HCT116 (cell line): ENCODE measurements at regions of chr1 and their contacts with region 1.

Region 1: GRCh38 chr1:11907275-11908094 is 18.7 kb downstream of the KIAA2013 start:
- DNase-seq: peak; percentile 92
- ATAC-seq: peak; percentile 63
- H3K4me3 ChIP-seq: no peak overlapping the region
- H3K27ac ChIP-seq: peak overlapping the region; percentile 62
- H3K4me1 ChIP-seq: peaks cover 5 to 32% of the 10 kb centered on the region in 2 experiments; a peak in 3 of 4 replicates
- H3K27me3 ChIP-seq: no peaks in the 10 kb centered on the region
- CTCF ChIP-seq: peak in 2 of 3 experiments; percentile 73 to 78; a peak in 4 of 6 replicates
- POLR2A ChIP-seq: no peak
- RAD21 ChIP-seq: no peak

Region 2: GRCh38 chr1:11838349-11839272 is 68.9 kb before region 1 on chr1:
- CTCF ChIA-PET with region 1: interaction called, 12 read pairs
- POLR2A ChIA-PET with region 1: interaction called, 9 read pairs
- RAD21 ChIA-PET with region 1: no interaction called
- intact Hi-C with region 1: loop called (anchors 1 kb)
- DNase-seq: no peak
- ATAC-seq: peak; percentile 98
- H3K4me3 ChIP-seq: no peak overlapping the region
- H3K27ac ChIP-seq: no peak overlapping the region
- H3K4me1 ChIP-seq: no peaks in the 10 kb centered on the region
- H3K27me3 ChIP-seq: no peaks in the 10 kb centered on the region
- CTCF ChIP-seq: peak; percentile 95 to 99 (median 97)
- POLR2A ChIP-seq: no peak
- RAD21 ChIP-seq: peak; percentile 99

Region 3: GRCh38 chr1:11918779-11919519 is 11.5 kb after region 1 on chr1:
- CTCF ChIA-PET with region 1: no interaction called
- POLR2A ChIA-PET with region 1: interaction called, 22 read pairs
- RAD21 ChIA-PET with region 1: no interaction called
- intact Hi-C with region 1: no loop called
- DNase-seq: no peak
- ATAC-seq: no peak
- H3K4me3 ChIP-seq: no peak overlapping the region
- H3K27ac ChIP-seq: no peak overlapping the region
- H3K4me1 ChIP-seq: peaks cover 0 to 8% of the 10 kb centered on the region in 2 experiments; a peak in 2 of 4 replicates
- H3K27me3 ChIP-seq: no peaks in the 10 kb centered on the region
- CTCF ChIP-seq: no peak
- POLR2A ChIP-seq: no peak
- RAD21 ChIP-seq: no peak

Region 4: GRCh38 chr1:11940260-11940921 is 32.9 kb after region 1 on chr1:
- CTCF ChIA-PET with region 1: no interaction called
- POLR2A ChIA-PET with region 1: interaction called, 47 read pairs
- RAD21 ChIA-PET with region 1: no interaction called
- intact Hi-C with region 1: no loop called
- DNase-seq: no peak
- ATAC-seq: no peak
- H3K4me3 ChIP-seq: no peak overlapping the region
- H3K27ac ChIP-seq: peak overlapping the region; percentile 12; the same call in 1 of the 2 replicates
- H3K4me1 ChIP-seq: peaks cover 53 to 66% of the 10 kb centered on the region in 2 experiments
- H3K27me3 ChIP-seq: no peaks in the 10 kb centered on the region
- CTCF ChIP-seq: no peak
- POLR2A ChIP-seq: no peak
- RAD21 ChIP-seq: no peak

Region 5: GRCh38 chr1:11979851-11980675 is 72.6 kb after region 1 on chr1 and contains the start of gene MFN2:
- CTCF ChIA-PET with region 1: interaction called, 5 read pairs
- POLR2A ChIA-PET with region 1: interaction called, 115 read pairs
- RAD21 ChIA-PET with region 1: interaction called, 3 to 10 read pairs
- intact Hi-C with region 1: loop called (anchors 1 kb)
- DNase-seq: peak; percentile 94
- ATAC-seq: peak; percentile 94
- H3K4me3 ChIP-seq: peak within 1 kb of the TSS; percentile 73 to 83
- H3K27ac ChIP-seq: peak within 1 kb of the TSS; percentile 89
- H3K4me1 ChIP-seq: peaks cover 21 to 24% of the 10 kb centered on the region in 2 experiments
- H3K27me3 ChIP-seq: no peaks in the 10 kb centered on the region
- CTCF ChIP-seq: no peak
- POLR2A ChIP-seq: peak; percentile 83
- RAD21 ChIP-seq: no peak
- total RNA-seq, gene MFN2: 83.0 TPM

Region 6: GRCh38 chr1:12078938-12079861 is 171.7 kb after region 1 on chr1:
- CTCF ChIA-PET with region 1: no interaction called
- POLR2A ChIA-PET with region 1: interaction called, 15 read pairs
- RAD21 ChIA-PET with region 1: no interaction called
- intact Hi-C with region 1: no loop called
- DNase-seq: peak; percentile 27
- ATAC-seq: peak; percentile 71
- H3K4me3 ChIP-seq: no peak overlapping the region
- H3K27ac ChIP-seq: no peak overlapping the region
- H3K4me1 ChIP-seq: peaks cover 0 to 16% of the 10 kb centered on the region in 2 experiments; a peak in 1 of 4 replicates
- H3K27me3 ChIP-seq: no peaks in the 10 kb centered on the region
- CTCF ChIP-seq: peak; percentile 55 to 70 (median 62)
- POLR2A ChIP-seq: no peak
- RAD21 ChIP-seq: peak; percentile 65